ENCODE measurements at regions of chr16 and their contacts with region 1.

Region 1: DNA sequence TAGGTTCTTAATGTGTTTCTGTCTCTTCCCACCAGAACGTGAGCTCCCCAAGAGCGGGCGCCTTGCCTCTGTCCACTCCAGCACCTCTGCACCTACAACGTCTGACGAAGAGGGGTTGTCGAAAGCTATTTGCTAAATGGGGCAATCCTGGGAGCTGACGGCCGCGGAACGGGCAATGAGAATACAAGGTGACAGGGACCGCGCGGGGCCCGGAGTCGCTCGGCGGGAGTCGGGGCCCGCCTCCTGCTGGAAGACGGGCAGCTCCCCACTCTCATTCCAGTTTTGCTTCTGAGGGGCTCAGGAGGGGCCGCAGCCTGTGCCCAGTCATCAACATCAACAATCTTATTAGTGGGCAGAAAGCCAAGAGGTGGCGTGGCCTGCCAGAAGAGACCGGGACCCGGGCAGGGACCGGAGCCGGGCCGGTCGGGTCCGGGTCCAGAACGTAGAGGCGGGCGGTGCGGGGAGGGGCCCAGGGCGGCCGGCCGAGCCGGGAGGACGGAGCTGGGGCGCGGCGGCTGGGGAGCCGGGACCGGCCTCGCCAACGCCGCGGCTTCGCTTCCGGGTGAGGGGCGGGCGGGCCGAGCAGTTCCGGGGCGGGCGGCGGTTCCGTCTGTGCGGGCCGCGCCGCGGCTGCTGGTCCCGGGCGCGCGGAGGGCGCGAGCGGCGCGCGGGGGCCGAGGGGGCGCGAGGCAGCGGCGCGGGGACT is at the start of gene MOSMO:
- DNase-seq: peak; percentile 85
- ATAC-seq: peak; percentile 88
- H3K4me3 ChIP-seq: peak within 1 kb of the TSS; percentile 96 to 98 (median 98)
- H3K27ac ChIP-seq: peak within 1 kb of the TSS; percentile 78
- H3K4me1 ChIP-seq: peaks cover 58% of the 10 kb centered on the region
- H3K27me3 ChIP-seq: peaks cover 0 to 11% of the 10 kb centered on the region in 2 experiments; a peak in 1 of 5 replicates
- CTCF ChIP-seq: peak; percentile 46
- EP300 ChIP-seq: no peak
- POLR2A ChIP-seq: peak in 1 of 2 experiments; percentile 78; a peak in 2 of 4 replicates
- RAD21 ChIP-seq: peak; percentile 62
- total RNA-seq, gene MOSMO: 19.1 and 26.7 TPM in 2 replicates

Region 2: GRCh38 chr16:21952793-21953540 is 54.7 kb before region 1 on chr16 and contains the start of gene UQCRC2:
- CTCF ChIA-PET with region 1: no interaction called
- POLR2A ChIA-PET with region 1: interaction called, 15 read pairs
- in situ Hi-C with region 1: no loop called
- intact Hi-C with region 1: no loop called
- DNase-seq: peak; percentile 97
- ATAC-seq: peak; percentile 97
- H3K4me3 ChIP-seq: peak within 1 kb of the TSS; percentile 78 to 98 (median 84)
- H3K27ac ChIP-seq: peak within 1 kb of the TSS; percentile 93
- H3K4me1 ChIP-seq: peaks cover 64% of the 10 kb centered on the region
- H3K27me3 ChIP-seq: peaks cover 0 to 4% of the 10 kb centered on the region in 2 experiments; a peak in 1 of 5 replicates
- CTCF ChIP-seq: no peak
- EP300 ChIP-seq: peak in 1 of 2 experiments; percentile 41; a peak in 3 of 4 replicates
- POLR2A ChIP-seq: peak; percentile 81 to 99
- RAD21 ChIP-seq: peak; percentile 30; the same call in 1 of the 2 replicates
- total RNA-seq, gene UQCRC2: 536 and 704 TPM in 2 replicates

Region 3: DNA sequence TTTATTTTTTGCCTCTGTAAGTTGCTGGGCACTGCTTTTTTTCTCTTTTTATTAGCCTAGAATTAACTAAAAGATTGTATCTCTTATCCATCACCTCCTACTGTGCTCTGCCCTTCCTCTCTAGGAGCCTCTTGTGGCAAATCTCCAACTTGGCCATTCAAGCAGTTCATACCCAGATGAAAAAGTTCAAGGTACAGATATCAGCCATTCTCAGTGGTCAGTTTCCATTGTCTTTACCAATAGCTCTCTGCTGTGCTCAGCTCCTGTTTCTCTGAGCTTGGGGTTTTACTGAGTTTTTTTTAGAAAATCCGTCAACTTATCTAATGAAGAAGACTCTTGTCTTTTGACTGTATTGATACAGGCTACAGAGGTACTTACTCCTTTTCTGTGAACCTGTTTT is 15.8 kb after region 1 on chr16:
- CTCF ChIA-PET with region 1: no interaction called
- POLR2A ChIA-PET with region 1: interaction called, 40 read pairs
- in situ Hi-C with region 1: no loop called
- intact Hi-C with region 1: no loop called
- DNase-seq: no peak
- ATAC-seq: peak; percentile 52; the same call in 2 of the 3 replicates
- H3K4me3 ChIP-seq: no peak overlapping the region
- H3K27ac ChIP-seq: no peak overlapping the region
- H3K4me1 ChIP-seq: peaks cover 57% of the 10 kb centered on the region
- H3K27me3 ChIP-seq: no peaks in the 10 kb centered on the region
- CTCF ChIP-seq: no peak
- EP300 ChIP-seq: no peak
- POLR2A ChIP-seq: no peak
- RAD21 ChIP-seq: no peak

Region 4: GRCh38 chr16:22297114-22297878 is 289.6 kb after region 1 on chr16 and contains the start of gene POLR3E:
- CTCF ChIA-PET with region 1: no interaction called
- POLR2A ChIA-PET with region 1: no interaction called
- in situ Hi-C with region 1: no loop called
- intact Hi-C with region 1: no loop called
- DNase-seq: peak; percentile 99
- ATAC-seq: peak; percentile 85
- H3K4me3 ChIP-seq: peak within 1 kb of the TSS; percentile 83 to 96 (median 94)
- H3K27ac ChIP-seq: peak within 1 kb of the TSS; percentile 92
- H3K4me1 ChIP-seq: peaks cover 51% of the 10 kb centered on the region
- H3K27me3 ChIP-seq: no peaks in the 10 kb centered on the region; a peak in 1 of 5 replicates
- CTCF ChIP-seq: peak; percentile 99
- EP300 ChIP-seq: peak; percentile 40 to 87; a peak in 3 of 4 replicates
- POLR2A ChIP-seq: peak; percentile 71 to 92
- RAD21 ChIP-seq: peak; percentile 100
- total RNA-seq, gene POLR3E: 94.8 and 135 TPM in 2 replicates